HepG2 (cell line): ENCODE measurements at regions of chr10 and their contacts with region 1.

Region 1: DNA sequence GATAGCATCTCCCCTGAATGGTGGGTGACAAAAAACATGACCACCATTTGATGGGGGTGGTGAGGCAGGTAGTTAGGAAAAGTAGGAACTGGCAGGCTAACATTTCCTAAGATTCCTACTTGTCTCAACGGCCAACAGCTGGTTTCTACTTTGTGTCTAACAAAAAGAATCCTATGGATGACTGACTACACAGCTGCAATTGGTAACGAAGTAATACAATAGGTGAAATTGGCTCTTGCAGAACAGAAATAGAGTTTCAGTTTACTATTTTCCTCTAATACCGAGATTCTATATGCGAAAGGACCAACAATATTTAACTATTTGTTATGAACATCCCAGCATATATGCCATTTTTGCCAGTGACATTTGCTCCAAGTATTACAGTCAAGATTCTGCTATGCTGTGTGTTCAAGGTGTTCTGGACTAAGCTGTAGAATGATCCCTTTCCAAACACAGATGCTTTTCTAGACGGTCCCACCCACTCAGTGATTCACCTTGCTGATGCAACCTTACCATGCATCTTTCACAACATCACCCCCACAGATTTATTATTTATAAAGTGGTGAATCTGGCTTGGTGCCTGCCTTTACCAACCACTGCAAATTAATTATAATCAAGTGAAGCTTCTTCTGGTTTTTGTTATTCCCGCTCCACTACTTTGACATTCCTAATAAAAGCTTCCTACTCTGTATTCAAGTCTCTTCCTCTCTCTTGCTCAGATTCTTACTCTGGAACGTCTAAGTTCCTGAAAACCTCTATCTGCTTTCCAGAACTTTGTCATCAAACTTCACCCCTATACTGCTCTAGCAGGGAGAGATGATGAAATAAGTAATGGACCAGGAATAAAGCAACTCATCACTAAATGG is 16.8 kb downstream of the BBIP1 start:
- DNase-seq: no peak
- ATAC-seq: no peak
- H3K4me3 ChIP-seq: no peak overlapping the region
- H3K27ac ChIP-seq: no peak overlapping the region
- H3K4me1 ChIP-seq: peaks cover 2% of the 10 kb centered on the region
- H3K27me3 ChIP-seq: no peaks in the 10 kb centered on the region
- CTCF ChIP-seq: no peak
- EP300 ChIP-seq: no peak
- POLR2A ChIP-seq: no peak
- RAD21 ChIP-seq: no peak

Region 2: DNA sequence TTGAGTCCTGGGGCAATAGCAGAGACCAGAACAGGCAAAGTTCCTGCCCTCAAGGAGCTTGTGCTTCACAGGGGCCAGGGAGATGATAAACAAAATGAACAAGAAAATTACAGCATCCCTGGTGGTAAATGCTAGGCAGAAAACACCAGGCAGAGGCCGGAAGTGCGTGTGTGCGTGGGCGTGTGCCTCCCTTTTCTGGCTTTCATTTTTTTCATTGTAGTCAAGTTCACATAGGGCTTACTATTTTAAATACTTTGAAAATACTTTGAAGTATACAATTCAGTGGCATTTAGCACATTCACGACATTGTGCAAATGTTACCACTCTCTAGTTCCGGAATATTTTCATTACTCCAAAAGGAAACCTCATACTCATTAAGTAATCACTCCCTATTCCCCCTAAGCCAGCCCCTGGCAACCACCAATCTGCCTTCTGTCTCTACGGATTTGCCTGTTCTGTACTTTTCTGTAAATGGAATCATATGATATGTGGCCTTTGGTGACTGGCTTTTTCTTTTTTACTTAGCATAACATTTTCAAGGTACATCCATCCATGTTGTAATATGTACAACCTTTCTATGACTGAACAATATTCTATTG is 118.6 kb before region 1 on chr10:
- CTCF ChIA-PET with region 1: no interaction called
- POLR2A ChIA-PET with region 1: no interaction called
- in situ Hi-C with region 1: no loop called
- intact Hi-C with region 1: no loop called
- DNase-seq: no peak
- ATAC-seq: no peak
- H3K4me3 ChIP-seq: no peak overlapping the region
- H3K27ac ChIP-seq: no peak overlapping the region
- H3K4me1 ChIP-seq: peaks cover 18% of the 10 kb centered on the region
- H3K27me3 ChIP-seq: peaks cover 0 to 5% of the 10 kb centered on the region in 2 experiments; a peak in 2 of 5 replicates
- CTCF ChIP-seq: no peak
- EP300 ChIP-seq: no peak
- POLR2A ChIP-seq: no peak
- RAD21 ChIP-seq: no peak

Region 3: DNA sequence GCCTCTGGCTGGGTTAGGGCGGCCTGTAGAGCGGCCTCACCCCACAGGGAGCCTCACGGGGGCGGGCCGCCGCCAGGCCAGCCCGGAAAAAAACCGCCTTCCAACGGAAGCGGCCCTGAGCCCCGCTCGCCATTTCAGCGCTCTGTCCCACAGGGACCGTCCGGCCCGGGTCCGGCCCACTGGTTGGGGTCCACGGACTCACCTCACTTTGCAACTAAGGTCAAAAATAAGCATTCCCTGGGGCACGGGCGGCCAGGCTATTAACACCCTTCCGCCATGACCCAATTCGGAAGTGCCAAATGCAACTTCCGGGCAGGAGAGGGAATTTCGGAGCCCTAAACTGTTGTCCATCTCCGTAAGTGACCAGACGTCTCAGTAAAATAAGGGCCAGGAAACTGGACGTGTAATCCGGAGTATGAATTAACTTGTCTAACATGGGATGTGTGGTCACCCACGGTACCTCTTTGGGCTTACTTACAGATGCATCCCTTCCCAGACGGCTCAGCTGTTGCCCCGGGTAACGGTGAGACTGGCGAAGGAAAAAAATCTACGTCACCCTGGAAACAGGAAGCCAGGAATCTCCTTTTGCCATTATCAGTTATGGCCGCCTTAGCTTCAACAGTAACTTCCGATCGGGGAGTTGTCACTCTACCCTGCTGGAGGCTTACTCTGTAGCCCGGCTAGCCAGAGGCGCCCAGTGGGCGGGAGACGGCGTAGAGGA is 16.6 kb after region 1 on chr10 and contains the start of gene BBIP1:
- CTCF ChIA-PET with region 1: no interaction called
- POLR2A ChIA-PET with region 1: interaction called, 24 read pairs
- in situ Hi-C with region 1: no loop called
- intact Hi-C with region 1: no loop called
- DNase-seq: peak; percentile 99
- ATAC-seq: peak; percentile 96
- H3K4me3 ChIP-seq: peak within 1 kb of the TSS; percentile 83 to 93 (median 89)
- H3K27ac ChIP-seq: peak within 1 kb of the TSS; percentile 97
- H3K4me1 ChIP-seq: peaks cover 43% of the 10 kb centered on the region
- H3K27me3 ChIP-seq: no peaks in the 10 kb centered on the region; a peak in 1 of 5 replicates
- CTCF ChIP-seq: peak; percentile 40
- EP300 ChIP-seq: 0 out of 4 replicates have a peak, but pooled peaks of 1 of the 2 experiments have one; percentile 28
- POLR2A ChIP-seq: peak; percentile 58 to 77; a peak in 3 of 4 replicates
- RAD21 ChIP-seq: peak; percentile 59
- total RNA-seq, gene BBIP1: 24.1 and 28.9 TPM in 2 replicates

Region 4: GRCh38 chr10:110944792-110945396 is 42.7 kb after region 1 on chr10:
- CTCF ChIA-PET with region 1: no interaction called
- POLR2A ChIA-PET with region 1: no interaction called
- in situ Hi-C with region 1: no loop called
- intact Hi-C with region 1: no loop called
- DNase-seq: no peak
- ATAC-seq: no peak
- H3K4me3 ChIP-seq: no peak overlapping the region
- H3K27ac ChIP-seq: no peak overlapping the region
- H3K4me1 ChIP-seq: no peaks in the 10 kb centered on the region
- H3K27me3 ChIP-seq: no peaks in the 10 kb centered on the region
- CTCF ChIP-seq: no peak
- EP300 ChIP-seq: no peak
- POLR2A ChIP-seq: no peak
- RAD21 ChIP-seq: no peak